A549 (cell line): ENCODE measurements at regions of chr10 and their contacts with region 1.

Region 1: GRCh38 chr10:63133056-63133820 is at the start of gene NRBF2:
- DNase-seq: peak; percentile 87 to 99
- ATAC-seq: peak; percentile 98 to 99
- H3K4me3 ChIP-seq: peak within 1 kb of the TSS; percentile 82
- H3K27ac ChIP-seq: peak within 1 kb of the TSS; percentile 89 to 93
- H3K4me1 ChIP-seq: peaks cover 9% of the 10 kb centered on the region; the same call in 2 of the 3 replicates
- CTCF ChIP-seq: peak; percentile 30
- EP300 ChIP-seq: no peak
- POLR2A ChIP-seq: peak; percentile 96
- RAD21 ChIP-seq: no peak
- polyA plus RNA-seq, gene NRBF2: 23.3 and 27.6 TPM in 2 replicates

Region 2: DNA sequence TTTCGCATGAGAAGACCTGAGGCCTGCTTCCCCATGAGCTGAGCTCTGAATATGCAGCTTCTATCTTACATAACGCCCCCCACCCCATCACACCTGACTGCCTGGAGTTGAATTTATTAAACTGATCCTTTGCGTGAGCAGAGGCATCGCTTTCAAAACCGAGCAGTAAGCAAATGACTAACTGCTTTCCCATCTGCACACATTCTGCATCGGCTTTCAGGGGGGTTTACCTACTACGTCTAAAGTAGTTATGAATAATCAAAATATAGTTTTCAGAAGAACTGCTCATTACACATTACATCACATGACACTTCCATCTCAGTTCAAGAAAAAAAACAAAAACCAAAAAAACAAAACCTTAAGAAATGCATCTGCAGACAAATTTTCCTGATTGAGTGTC is 262.4 kb before region 1 on chr10:
- CTCF ChIA-PET with region 1: no interaction called
- POLR2A ChIA-PET with region 1: no interaction called
- DNase-seq: no peak
- ATAC-seq: no peak
- H3K4me3 ChIP-seq: no peak overlapping the region
- H3K27ac ChIP-seq: no peak overlapping the region
- H3K4me1 ChIP-seq: no peaks in the 10 kb centered on the region
- CTCF ChIP-seq: no peak
- EP300 ChIP-seq: no peak
- POLR2A ChIP-seq: no peak
- RAD21 ChIP-seq: no peak

Region 3: DNA sequence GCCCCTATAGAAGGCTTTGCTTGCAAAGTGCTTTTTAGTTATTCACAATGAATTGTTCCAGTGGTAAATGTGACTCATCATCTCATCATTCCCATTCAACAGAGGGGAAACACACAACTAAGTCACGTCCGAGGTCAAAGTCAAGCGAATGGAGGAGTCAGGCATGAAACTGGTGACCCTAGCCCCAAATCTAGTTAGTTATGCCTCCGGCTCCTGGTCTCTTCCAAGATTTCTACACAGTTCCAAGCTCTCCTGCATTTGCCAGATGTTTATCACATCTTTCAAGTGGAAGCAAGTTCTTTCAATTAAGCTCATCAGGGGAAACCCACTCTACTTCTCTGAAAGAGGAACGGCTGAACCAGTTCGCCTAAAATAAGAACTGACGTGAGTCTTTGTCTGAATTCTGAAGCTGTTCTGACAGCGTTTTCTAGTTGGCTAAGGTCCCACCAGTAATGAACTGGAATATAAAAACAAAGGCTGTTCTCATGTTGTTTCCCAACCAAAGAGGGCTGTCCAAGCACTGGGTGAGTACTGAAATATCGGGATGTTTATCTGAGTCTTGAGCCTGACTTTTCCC is 141.0 kb before region 1 on chr10:
- CTCF ChIA-PET with region 1: no interaction called
- POLR2A ChIA-PET with region 1: interaction called, 11 read pairs
- DNase-seq: no peak
- ATAC-seq: no peak
- H3K4me3 ChIP-seq: no peak overlapping the region
- H3K27ac ChIP-seq: no peak overlapping the region
- H3K4me1 ChIP-seq: no peaks in the 10 kb centered on the region
- CTCF ChIP-seq: no peak
- EP300 ChIP-seq: no peak
- POLR2A ChIP-seq: no peak
- RAD21 ChIP-seq: no peak

Region 4: DNA sequence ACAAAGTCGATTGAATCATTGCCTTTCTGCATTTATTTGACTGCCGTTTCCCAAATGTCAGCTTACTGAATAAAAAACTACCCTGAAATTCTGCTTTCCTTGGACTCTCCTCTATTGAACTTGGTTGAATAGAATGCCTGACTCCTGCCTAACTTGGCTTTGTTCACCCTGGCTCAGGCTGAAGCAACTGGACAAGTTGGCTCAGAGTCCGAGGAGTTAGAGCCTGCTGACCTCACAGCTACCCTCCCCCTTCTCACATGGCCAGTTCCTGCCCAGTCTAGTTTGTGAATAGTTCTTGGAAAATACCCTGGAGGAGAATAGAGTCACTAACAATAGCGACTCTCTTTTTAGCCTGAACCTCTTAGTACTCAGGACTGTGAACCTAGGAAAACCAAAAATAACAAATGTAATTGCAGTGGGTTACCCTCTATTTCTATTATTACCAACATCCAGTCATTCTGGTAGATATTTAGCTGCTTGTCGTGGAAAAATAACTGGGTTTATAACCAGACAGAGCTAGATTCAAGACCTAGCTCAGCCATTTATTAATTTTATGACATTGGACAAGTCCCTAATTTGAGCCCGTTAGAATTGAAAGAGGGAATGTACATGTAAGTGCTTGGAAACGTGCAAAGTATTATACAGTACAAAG is 17.4 kb before region 1 on chr10:
- CTCF ChIA-PET with region 1: interaction called, 7 read pairs
- POLR2A ChIA-PET with region 1: interaction called, 10 read pairs
- DNase-seq: peak in 1 of 2 experiments; percentile 39
- ATAC-seq: peak; percentile 60 to 64
- H3K4me3 ChIP-seq: no peak overlapping the region
- H3K27ac ChIP-seq: peak overlapping the region; percentile 72 to 79; a peak in 2 of 6 replicates
- H3K4me1 ChIP-seq: peaks cover 23% of the 10 kb centered on the region; the same call in 2 of the 3 replicates
- CTCF ChIP-seq: no peak
- EP300 ChIP-seq: no peak
- POLR2A ChIP-seq: no peak
- RAD21 ChIP-seq: no peak

Region 5: GRCh38 chr10:63145782-63146181 is 12.5 kb after region 1 on chr10:
- CTCF ChIA-PET with region 1: interaction called, 5 read pairs
- POLR2A ChIA-PET with region 1: interaction called, 10 read pairs
- DNase-seq: no peak
- ATAC-seq: no peak
- H3K4me3 ChIP-seq: no peak overlapping the region
- H3K27ac ChIP-seq: no peak overlapping the region
- H3K4me1 ChIP-seq: no peaks in the 10 kb centered on the region
- CTCF ChIP-seq: no peak
- EP300 ChIP-seq: no peak
- POLR2A ChIP-seq: no peak
- RAD21 ChIP-seq: no peak